ENCODE measurements at regions of chr20 and their contacts with region 1.

Region 1: DNA sequence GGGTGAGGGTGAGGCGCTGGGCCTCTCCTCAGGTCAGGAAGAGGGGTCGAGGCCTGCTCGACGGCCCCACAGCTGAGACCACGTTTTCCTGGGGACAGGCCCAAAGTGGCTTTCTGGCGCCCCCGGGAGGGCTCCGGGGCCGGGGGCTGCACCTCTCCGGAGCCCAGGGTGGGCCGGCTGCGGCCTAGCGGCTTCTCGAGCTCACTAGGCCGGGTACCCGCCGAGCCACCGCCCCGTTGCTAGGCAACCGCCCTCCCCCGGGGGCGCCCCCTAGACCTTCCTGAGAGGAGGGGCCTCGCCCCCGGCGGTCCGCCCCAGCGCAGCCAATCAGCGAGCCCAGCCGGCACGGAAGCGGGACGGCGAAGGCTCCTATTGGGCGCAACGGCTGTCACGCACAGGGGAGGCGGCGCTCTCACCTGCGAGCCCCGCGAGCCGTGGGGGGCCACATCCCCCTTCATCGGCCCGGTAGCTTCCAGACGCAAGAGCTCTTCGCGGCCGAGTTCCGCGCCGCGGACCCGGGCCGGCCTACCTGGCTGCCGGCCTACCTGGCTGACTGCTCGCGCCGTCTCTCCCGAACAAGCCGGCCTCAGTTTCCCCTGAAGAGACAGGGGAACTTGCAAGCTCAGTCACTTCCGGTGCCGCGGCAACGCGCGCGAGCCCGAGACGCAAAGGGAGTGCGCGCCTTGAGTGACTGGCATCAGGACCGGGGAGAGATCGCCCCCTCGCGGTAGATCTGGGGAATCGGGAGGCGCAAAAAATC is 831 bp upstream of the BCL2L1 start:
- DNase-seq: peak; percentile 86 to 99
- H3K4me3 ChIP-seq: peak overlapping the region; percentile 88
- H3K27ac ChIP-seq: peak overlapping the region; percentile 99
- H3K4me1 ChIP-seq: peaks cover 19% of the 10 kb centered on the region
- H3K27me3 ChIP-seq: no peaks in the 10 kb centered on the region
- CTCF ChIP-seq: peak; percentile 94

Region 2: DNA sequence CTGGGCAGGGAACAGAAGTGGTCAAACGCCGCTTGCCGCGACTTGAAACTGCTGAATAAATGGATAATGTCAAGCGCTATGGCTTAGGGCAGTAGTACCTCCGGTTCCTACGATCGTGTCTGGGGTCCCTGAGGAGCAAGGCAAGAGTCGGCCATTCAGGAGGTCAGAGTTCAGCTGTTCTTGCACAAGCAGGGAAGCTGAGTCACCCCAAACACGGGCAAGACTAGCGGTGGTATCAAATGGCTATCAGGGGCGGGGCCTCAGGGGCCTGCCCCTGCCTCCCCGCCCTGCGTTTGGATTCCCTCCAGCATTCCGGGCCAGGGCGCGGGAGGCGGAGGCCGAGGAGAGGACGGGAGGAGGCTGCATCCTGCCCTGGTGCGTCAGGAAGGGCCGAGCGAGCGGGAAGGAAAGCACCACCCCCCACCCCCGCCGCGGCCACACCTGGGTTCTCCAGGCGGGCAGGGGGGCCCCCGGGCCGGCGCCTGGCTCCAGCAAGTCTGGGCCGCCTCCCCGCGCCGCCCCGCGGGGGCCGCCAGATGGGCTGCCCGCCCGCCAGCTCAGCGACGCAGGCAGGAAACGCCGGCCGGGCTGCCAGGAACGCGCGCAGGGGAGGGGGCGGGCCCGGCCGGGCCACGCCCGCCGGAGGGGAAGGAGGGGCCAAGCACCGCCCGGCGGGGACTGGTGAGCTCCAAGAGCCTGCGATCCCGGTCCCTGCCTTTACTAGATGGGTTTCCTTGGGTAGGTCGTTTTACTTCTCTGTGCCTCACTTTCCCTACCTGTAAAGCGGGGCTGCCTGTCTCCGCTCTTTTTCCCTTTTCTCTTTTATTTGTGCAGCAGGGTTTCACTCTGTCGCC is 150.6 kb before region 1 on chr20:
- CTCF ChIA-PET with region 1: no interaction called
- POLR2A ChIA-PET with region 1: interaction called, 22 read pairs
- intact Hi-C with region 1: no loop called
- DNase-seq: peak; percentile 95 to 100
- H3K4me3 ChIP-seq: peak overlapping the region; percentile 64
- H3K27ac ChIP-seq: peak overlapping the region; percentile 96
- H3K4me1 ChIP-seq: peaks cover 46% of the 10 kb centered on the region
- H3K27me3 ChIP-seq: no peaks in the 10 kb centered on the region
- CTCF ChIP-seq: no peak

Region 3: DNA sequence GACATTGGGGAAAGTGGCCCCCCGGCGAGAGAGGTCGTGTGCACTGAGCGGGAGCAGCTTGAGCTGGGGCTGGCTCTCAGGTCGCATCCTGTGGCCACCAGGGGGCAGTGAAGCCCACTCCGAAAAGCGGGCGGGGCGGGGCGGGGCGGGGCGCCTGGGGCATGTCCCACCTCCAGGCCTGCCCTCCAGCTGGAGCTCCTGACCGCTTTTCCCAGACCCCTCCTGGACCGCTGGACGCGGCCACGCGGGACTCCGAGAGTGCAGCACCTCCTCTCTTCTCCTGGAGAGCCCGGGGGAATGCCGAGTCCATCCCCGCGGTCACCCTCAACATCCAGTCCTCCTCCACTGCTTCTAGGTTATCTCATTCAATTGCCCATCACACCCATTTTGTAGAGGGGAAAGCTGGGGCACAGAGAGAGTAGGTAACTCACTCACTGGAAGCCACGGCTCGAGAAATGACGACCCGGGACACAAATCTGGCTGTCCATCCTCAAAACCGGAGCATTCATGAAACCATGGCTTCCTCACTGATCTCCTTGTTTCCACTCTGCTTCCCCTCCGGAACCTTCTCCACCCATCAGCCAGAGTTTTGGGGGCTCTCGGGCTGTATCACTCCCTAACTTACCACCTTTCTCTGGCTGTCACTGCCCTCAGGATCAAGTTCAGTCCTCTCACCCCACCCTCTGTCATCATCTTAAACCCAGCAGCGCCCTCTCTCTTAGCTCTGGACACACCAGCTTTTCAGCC is 61.7 kb before region 1 on chr20:
- CTCF ChIA-PET with region 1: interaction called, 112 read pairs
- POLR2A ChIA-PET with region 1: interaction called, 12 read pairs
- intact Hi-C with region 1: loop called (anchors 1 kb)
- DNase-seq: peak in 1 of 2 experiments; percentile 73
- H3K4me3 ChIP-seq: no peak overlapping the region; the same call in 1 of the 2 replicates
- H3K27ac ChIP-seq: peak overlapping the region; percentile 30
- H3K4me1 ChIP-seq: peaks cover 47% of the 10 kb centered on the region
- H3K27me3 ChIP-seq: no peaks in the 10 kb centered on the region
- CTCF ChIP-seq: peak; percentile 79

Region 4: DNA sequence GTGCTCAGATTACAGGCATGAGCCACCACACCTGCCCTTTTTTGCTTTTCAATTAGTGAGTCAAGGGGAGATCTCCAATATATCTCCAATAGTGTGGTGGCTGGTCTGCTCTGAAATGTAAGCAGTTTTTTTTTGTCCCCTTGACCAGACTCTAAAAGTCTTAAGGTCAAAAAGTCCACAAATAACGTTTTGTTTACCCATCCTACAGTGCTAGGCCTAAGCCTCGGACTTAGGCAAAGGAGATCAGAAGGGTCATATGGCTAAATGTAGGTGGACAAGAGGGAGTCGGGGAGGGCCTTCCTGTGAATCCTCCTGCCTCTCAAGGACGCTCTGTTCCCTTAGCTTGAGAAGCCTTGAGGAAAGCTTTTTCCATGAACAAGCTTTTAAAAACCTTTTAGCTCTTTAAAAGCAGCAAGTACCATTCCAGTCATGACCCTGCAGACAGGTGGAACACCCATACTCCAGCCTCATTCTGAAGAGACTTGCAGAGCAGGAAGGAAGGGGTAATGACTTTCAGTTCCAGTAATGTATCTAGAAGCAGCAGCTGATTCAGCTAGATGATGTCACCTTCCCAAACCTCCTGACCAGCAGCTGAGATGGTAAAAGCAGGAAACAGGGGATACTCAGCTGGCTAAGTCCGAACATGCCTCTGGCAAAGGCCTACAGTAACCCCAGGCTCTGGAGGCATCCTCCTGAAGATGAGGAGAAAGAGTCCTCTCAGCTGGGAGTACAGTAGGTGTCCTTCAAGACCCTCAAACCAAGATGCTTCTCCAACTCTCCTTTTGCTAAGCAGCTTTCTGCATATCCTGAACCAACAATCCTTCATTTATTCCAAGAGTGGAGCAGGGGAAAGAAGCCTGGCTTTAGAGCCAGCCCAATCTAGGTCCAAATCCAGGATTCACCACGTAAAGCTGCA is 24.4 kb before region 1 on chr20:
- CTCF ChIA-PET with region 1: interaction called, 34 read pairs
- POLR2A ChIA-PET with region 1: interaction called, 28 read pairs
- intact Hi-C with region 1: loop called (anchors 1 kb)
- DNase-seq: peak; percentile 58 to 91
- H3K4me3 ChIP-seq: no peak overlapping the region
- H3K27ac ChIP-seq: peak overlapping the region; percentile 95
- H3K4me1 ChIP-seq: peaks cover 90% of the 10 kb centered on the region
- H3K27me3 ChIP-seq: no peaks in the 10 kb centered on the region
- CTCF ChIP-seq: no peak

Region 5: DNA sequence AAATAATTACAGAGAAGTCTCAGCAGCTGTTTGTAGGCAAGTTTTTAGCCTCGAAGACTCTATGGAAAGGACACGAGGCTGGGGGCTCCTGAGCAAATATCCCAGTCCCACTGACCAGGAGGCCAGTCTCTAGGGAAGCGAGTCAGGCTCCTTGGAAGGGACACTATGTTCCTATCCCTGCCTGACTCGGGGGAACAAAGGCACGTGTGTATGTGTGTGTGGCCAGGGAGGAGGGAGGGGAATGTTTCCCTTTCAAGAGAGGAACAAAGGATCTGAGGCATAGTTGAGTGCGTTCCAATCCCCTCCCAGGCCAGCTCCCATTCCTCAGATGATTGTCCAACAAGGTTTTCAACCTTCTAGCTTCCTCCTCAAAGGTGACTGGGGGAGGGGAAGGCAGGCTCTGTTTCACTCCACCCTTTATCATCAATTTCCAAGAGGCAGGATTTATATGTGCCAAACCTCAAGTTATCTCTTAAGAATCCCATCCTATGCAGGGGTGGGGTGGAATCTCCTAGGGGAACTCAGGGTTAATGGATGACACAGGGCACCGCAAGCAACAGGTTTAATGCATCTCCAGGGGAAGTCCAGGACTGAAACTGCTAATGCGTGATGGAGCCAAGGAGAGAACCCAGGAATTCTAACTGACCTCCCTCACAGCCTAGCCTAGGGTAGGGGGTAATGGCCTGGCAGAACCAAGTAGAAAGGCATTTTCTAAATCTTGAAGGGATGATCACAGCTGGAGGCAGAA is 10.8 kb before region 1 on chr20:
- CTCF ChIA-PET with region 1: interaction called, 13 read pairs
- POLR2A ChIA-PET with region 1: interaction called, 9 read pairs
- intact Hi-C with region 1: loop called (anchors 1 kb)
- DNase-seq: peak; percentile 90 to 95
- H3K4me3 ChIP-seq: peak overlapping the region; percentile 47; the same call in 1 of the 2 replicates
- H3K27ac ChIP-seq: peak overlapping the region; percentile 99
- H3K4me1 ChIP-seq: peaks cover 97% of the 10 kb centered on the region
- H3K27me3 ChIP-seq: no peaks in the 10 kb centered on the region
- CTCF ChIP-seq: 0 out of 2 replicates have a peak, but pooled peaks have one; percentile 19

Region 6: DNA sequence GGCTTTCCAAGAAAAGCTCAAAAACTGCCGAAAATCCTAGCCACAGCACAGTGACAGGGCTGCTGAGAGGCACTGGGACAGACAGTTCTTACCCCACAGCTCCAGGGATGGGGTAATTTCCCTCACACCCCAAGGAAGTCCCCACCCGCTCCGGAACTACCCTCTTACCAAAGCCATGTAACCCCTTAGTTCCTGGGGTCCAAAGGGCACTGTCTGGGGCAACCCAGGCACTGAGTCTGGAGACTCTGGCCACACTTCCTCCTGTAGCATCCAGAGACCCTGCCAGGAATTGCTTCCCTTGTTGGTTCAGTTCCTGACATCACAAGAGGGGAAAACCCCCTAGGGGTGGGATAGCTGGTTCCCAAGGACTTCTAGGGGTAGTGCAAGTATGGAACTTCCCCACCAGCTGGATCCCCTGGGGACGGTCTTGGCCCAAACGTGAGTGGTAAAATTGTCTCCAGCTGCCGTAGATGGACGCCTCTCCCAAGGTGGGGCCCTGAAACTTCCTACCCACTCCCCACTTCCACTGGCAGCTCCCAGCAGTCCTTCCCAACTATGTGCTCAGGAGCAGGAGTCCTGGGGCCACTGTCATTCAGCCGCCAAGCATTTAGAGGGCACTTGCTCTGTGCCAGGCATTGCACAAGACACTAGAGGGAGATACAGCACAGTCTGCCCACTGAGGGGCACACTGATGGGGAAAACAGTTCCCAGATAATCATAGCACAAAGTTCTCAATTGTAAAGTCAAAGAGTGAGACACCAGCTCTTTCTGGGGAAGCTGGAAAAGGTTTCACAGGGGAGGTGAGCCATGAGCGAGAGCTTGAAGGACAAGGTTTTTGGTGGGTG is 311.3 kb after region 1 on chr20:
- CTCF ChIA-PET with region 1: no interaction called
- POLR2A ChIA-PET with region 1: no interaction called
- intact Hi-C with region 1: no loop called
- DNase-seq: no peak
- H3K4me3 ChIP-seq: no peak overlapping the region
- H3K27ac ChIP-seq: no peak overlapping the region
- H3K4me1 ChIP-seq: no peaks in the 10 kb centered on the region
- H3K27me3 ChIP-seq: peaks cover 68% of the 10 kb centered on the region
- CTCF ChIP-seq: no peak